A549 (cell line): ENCODE measurements at regions of chr16 and their contacts with region 1.

Region 1: GRCh38 chr16:15553313-15554088 is 89.5 kb downstream of the MARF1 start:
- DNase-seq: no peak
- ATAC-seq: no peak
- H3K4me3 ChIP-seq: no peak overlapping the region
- H3K27ac ChIP-seq: peak overlapping the region in 1 of 2 experiments; percentile 13; a peak in 2 of 6 replicates
- H3K4me1 ChIP-seq: peaks cover 22% of the 10 kb centered on the region
- CTCF ChIP-seq: no peak
- EP300 ChIP-seq: no peak
- POLR2A ChIP-seq: no peak
- RAD21 ChIP-seq: no peak

Region 2: DNA sequence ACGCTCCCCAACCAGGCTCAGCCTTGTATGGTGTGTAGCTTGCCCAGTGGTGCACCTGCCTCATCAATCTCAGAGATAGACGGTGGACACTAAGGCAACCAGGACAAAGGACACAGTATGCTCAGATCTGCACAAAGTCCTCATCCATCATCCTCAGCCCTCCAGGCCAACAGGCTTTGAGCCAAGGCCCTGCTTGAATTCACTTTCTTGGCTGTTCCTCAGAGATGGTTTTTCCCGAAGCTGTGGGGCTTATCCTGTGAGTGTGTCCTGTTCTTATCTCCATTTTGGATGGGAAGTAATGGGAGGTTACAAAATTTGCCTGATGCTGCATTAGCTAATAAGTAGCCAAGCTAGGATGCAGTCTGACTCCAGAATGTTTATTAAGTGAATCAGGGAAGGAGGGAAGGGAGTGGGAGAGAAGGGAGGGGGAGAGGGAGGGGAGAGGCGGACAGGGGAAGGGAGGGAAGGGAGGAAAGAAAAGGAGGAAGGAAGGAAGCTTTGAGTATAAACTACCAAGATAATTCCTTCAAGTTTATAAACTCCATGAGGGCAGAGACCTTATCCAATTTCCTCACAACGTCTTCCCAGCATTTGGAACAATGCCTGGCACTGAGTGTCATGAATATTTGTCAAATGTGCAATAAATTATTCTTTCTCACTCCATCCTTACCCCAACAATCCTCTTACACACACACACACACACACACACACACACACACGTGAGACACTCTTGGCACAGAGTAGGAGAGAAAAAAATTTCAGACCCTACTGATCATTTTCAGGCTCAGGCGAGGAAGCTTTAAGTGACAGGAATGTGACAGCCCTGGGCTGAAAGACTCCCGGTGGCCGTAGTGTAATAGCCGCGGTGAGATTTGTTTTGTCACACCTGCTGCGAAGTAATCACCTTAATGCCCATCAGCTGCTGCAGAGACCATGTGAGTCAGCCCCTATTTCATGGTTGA is 34.8 kb before region 1 on chr16:
- CTCF ChIA-PET with region 1: interaction called, 35 read pairs
- POLR2A ChIA-PET with region 1: no interaction called
- DNase-seq: peak; percentile 82 to 88
- ATAC-seq: peak; percentile 83 to 94
- H3K4me3 ChIP-seq: no peak overlapping the region
- H3K27ac ChIP-seq: peak overlapping the region; percentile 66 to 88
- H3K4me1 ChIP-seq: peaks cover 51% of the 10 kb centered on the region
- CTCF ChIP-seq: no peak
- EP300 ChIP-seq: no peak
- POLR2A ChIP-seq: no peak
- RAD21 ChIP-seq: no peak

Region 3: GRCh38 chr16:16071631-16072244 is 518.2 kb after region 1 on chr16:
- CTCF ChIA-PET with region 1: no interaction called
- POLR2A ChIA-PET with region 1: no interaction called
- DNase-seq: no peak
- ATAC-seq: no peak
- H3K4me3 ChIP-seq: no peak overlapping the region
- H3K27ac ChIP-seq: 0 out of 6 replicates have a peak overlapping the region, but pooled peaks of 1 of the 2 experiments have one; percentile 4
- H3K4me1 ChIP-seq: peaks cover 55% of the 10 kb centered on the region
- CTCF ChIP-seq: no peak
- EP300 ChIP-seq: no peak
- POLR2A ChIP-seq: no peak
- RAD21 ChIP-seq: no peak